ENCODE measurements at regions of chr3 and their contacts with region 1.

Region 1: DNA sequence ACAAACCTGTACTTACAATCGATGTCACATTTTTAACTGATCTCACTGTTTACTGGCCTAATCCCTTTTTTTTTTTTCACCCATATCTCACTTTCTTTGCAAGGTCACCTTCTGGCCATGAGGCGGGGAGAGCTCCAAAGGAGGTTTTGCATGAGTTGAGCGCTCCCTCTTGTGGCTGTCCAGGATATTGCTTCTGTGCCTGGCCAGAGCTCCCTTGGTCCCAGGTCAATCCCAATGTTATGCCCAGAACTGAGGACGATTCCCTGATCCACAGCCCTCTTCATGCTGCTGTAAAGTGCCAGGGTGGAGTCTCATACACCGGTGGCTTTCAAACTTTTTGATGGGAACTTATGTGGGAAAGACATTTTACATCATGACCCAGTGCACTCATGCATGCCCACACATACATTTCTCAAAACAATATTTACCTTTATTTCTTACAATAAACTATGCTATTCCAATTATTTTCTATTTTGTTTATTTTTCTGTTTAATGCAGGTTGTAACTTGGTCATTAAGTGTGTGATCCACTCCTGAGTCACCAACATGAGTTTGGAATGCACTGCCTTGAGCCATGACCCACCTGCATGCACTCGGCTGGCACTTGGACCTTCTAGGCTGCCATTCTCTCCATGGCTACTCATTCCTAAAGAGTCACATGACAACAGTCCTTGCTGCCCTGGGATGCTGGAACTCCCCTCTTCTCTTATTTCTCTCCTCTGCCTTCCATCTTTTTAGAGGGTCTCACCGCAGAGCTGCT is 9.6 kb upstream of the SST start:
- DNase-seq: peak; percentile 41 to 66
- ATAC-seq: peak; percentile 94 to 97
- H3K4me3 ChIP-seq: no peak overlapping the region
- H3K27ac ChIP-seq: no peak overlapping the region
- H3K4me1 ChIP-seq: no peaks in the 10 kb centered on the region
- CTCF ChIP-seq: peak; percentile 75
- EP300 ChIP-seq: no peak
- POLR2A ChIP-seq: no peak
- RAD21 ChIP-seq: peak; percentile 79 to 89

Region 2: GRCh38 chr3:187594272-187594671 is 85.5 kb before region 1 on chr3:
- CTCF ChIA-PET with region 1: interaction called, 13 read pairs
- POLR2A ChIA-PET with region 1: no interaction called
- DNase-seq: no peak
- ATAC-seq: no peak
- H3K4me3 ChIP-seq: no peak overlapping the region
- H3K27ac ChIP-seq: no peak overlapping the region
- H3K4me1 ChIP-seq: no peaks in the 10 kb centered on the region
- CTCF ChIP-seq: no peak
- EP300 ChIP-seq: no peak
- POLR2A ChIP-seq: no peak
- RAD21 ChIP-seq: no peak

Region 3: GRCh38 chr3:187662848-187663409 is 16.9 kb before region 1 on chr3:
- CTCF ChIA-PET with region 1: interaction called, 15 read pairs
- POLR2A ChIA-PET with region 1: no interaction called
- DNase-seq: no peak
- ATAC-seq: no peak
- H3K4me3 ChIP-seq: no peak overlapping the region
- H3K27ac ChIP-seq: no peak overlapping the region
- H3K4me1 ChIP-seq: no peaks in the 10 kb centered on the region
- CTCF ChIP-seq: no peak
- EP300 ChIP-seq: no peak
- POLR2A ChIP-seq: no peak
- RAD21 ChIP-seq: no peak

Region 4: DNA sequence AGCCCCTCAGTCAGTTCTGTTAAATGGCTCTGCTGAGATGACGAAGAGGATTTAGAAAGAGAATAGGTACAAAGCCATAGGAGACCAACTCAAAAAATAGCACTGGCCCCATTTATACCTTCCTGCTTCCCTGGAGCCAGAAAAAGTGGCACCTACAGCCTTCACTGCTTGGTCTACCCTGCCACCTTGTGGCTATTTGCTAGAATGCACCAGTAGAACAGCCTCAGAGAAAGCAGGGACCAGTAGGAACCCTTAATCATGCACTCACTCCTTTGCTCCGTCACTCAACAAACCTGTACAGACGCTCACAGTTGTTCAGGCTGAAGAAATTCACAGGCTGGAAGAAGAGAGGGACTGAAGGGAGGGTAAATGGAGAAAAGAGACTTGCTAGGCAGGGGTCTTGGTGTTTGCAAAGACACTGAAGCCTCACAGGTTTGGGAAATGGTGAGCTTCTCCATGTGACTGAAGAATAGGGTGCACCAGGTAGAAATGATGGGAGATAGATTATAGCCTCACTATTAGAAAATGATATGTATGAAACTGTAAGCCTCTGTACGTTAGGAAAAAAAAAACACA is 34.7 kb after region 1 on chr3:
- CTCF ChIA-PET with region 1: interaction called, 16 read pairs
- POLR2A ChIA-PET with region 1: no interaction called
- DNase-seq: peak; percentile 59 to 65
- ATAC-seq: peak; percentile 91 to 94
- H3K4me3 ChIP-seq: no peak overlapping the region
- H3K27ac ChIP-seq: no peak overlapping the region
- H3K4me1 ChIP-seq: no peaks in the 10 kb centered on the region
- CTCF ChIP-seq: peak; percentile 71
- EP300 ChIP-seq: no peak
- POLR2A ChIP-seq: no peak
- RAD21 ChIP-seq: peak; percentile 85 to 91

Measured in A549 (cell line).